Cardiac septum (tissue), 1 donor: ENCODE measurements at regions of chr6 and their contacts with region 1.

Region 1: GRCh38 chr6:133241086-133241900 is at the start of gene EYA4:
- DNase-seq: peak; percentile 76
- total RNA-seq, gene EYA4: 24.2 TPM

Region 2: DNA sequence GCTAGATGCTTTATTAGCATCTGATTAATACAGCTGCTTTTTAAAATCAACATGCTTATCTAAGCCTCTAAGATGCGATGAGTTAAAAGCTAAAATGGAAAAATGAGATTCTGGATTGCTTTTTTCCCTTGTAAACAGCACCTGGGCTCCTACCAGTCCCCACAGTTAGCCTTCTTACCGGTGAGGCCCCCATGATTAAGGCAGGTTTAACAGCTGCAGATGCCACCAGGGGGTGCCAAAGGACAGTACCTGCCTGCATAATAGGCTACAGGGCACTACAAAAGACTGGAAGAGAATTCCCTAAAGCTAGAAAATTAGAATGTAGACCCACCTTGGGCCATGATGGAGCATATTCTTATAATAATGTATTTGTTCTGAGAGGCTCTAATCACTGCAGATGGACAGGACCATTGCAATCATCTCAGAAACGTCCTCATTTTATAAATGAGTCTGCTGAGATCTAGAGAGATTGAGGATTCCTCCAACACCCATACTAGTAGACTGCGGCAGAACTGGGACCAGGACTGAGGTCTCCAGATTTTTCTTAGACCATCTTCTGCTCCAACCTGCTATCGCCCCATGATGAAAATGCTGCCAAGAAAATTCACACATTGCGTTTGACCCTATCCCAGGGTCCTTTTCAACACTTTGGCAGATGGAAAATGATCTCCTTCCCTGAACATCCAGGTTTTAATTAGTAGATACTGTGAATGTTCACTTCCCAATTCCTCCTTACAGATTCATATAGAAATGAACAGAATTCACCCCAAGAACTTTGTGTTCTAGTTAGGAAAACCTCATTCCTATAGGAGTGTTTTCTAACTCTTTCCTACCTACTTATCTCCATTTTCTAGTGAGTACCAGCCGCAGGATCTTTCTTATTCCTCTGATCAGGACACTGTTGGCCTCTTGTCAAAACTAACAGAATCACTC is 278.1 kb before region 1 on chr6:
- intact Hi-C with region 1: loop called (anchors 10 kb)
- DNase-seq: no peak

Region 3: GRCh38 chr6:133062077-133062476 is 179.2 kb before region 1 on chr6:
- intact Hi-C with region 1: loop called (anchors 5 kb)
- DNase-seq: no peak

Region 4: GRCh38 chr6:133130863-133131262 is 110.4 kb before region 1 on chr6:
- intact Hi-C with region 1: loop called (anchors 5 kb)
- DNase-seq: peak; percentile 87

Region 5: DNA sequence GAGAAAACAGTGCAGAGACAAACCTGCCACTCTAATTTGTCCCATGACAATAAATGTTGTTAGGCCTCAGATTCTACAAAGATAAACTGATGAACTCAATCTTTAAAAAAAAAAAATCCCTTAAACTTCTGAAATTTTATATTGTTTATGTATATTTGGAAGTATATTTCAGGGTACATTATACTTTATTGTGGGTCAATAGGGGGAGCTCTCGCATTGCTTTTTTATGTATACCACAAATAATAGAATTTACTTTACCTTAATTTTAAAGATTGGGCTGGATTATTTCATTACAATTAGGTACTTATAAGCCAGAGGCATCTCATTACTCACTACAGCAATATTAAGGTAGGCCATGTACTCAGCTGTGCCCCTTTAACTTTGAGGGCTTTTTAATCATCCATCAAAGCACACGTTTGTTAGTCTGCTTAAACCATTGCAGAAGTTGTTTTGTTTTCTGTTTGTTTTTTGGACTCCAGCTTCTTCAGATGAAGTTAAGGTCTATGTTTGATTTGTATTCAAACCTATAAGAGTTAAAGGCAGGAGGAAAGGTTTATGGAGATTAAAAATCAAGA is 56.4 kb before region 1 on chr6:
- intact Hi-C with region 1: loop called (anchors 5 kb)
- DNase-seq: no peak

Region 6: GRCh38 chr6:133360194-133360593 is 118.9 kb after region 1 on chr6:
- intact Hi-C with region 1: loop called (anchors 5 kb)
- DNase-seq: no peak

Region 7: GRCh38 chr6:133502441-133503259 is 261.4 kb after region 1 on chr6:
- intact Hi-C with region 1: loop called (anchors 5 kb)
- DNase-seq: no peak